ENCODE measurements at regions of chr19 and their contacts with region 1.

Region 1: DNA sequence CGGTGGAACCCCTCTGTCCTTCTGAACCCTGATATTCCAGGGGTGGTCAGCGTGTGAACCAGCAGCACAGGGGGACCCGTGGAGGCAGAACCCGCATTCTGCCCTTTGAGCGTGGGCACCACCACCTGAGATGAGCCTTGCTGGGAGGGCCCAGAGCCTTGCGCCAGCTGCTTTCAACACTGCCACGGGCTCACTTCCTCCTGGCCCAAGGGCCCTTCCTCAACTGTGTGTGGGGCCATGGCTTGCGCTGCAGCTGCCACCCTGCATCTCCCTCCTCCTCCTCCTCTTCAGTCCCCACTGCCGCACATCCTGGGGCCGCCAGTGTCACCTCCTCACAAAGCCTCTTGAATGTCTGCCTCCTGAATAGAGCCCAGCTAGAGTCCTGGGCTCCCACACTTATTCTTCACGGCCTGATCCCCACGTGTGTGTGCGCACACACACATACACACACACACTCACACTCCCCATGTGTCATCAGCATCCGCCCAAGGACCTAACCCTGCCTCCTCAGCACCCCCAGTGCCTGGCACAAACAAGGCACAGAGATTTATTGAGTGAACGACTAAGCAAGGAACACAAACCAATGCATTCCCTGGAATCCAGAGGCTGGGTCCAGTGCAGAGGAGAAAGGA is 26.9 kb upstream of the TMEM160 start:
- DNase-seq: no peak
- H3K4me3 ChIP-seq: no peak overlapping the region
- CTCF ChIP-seq: no peak

Region 2: DNA sequence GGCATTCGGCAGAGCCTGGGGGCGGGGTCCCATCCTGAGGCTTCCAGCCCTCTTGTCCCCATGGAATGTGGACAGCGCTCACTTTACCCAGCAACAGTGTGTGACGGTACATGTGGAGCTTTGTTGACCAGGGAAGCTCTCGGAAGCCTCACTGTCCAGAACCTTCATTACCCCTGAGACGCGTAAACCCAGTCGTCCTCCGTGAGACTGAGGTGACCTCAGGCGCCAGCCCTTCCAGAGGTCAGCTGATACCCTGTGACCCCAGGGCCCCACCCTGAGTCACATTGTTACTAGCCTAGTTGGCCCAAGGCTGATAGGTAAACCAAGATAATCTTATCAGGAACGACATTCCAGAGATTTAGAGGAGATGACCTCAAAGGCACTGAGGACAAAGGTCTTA is 16.7 kb before region 1 on chr19:
- CTCF ChIA-PET with region 1: interaction called, 14 read pairs
- POLR2A ChIA-PET with region 1: no interaction called
- DNase-seq: no peak
- H3K4me3 ChIP-seq: no peak overlapping the region
- CTCF ChIP-seq: no peak

Region 3: DNA sequence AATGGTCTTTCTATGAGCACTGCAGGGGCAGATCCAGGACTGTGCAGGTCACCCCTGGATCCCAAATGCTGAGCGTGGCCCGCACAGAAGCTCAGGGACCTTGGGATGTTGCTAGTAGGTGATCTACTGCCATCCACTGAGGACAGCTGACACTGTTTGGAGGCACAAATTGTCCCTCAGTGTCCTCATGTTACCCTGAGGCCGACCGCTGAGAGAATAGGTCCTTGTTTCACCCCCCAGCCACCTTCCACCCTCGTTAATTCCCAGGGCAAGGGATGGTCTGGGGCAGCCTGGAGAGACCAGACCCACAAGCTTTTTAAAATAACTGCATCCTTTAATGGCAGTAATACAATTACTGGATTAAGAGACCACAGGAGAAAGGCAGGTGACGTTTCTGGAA is 11.4 kb before region 1 on chr19:
- CTCF ChIA-PET with region 1: interaction called, 14 read pairs
- POLR2A ChIA-PET with region 1: no interaction called
- DNase-seq: no peak
- H3K4me3 ChIP-seq: no peak overlapping the region
- CTCF ChIP-seq: no peak

Region 4: GRCh38 chr19:47112997-47113849 is 37.9 kb after region 1 on chr19 and contains the start of gene ZC3H4:
- CTCF ChIA-PET with region 1: interaction called, 19 read pairs
- POLR2A ChIA-PET with region 1: interaction called, 8 read pairs
- DNase-seq: peak; percentile 95
- H3K4me3 ChIP-seq: peak within 1 kb of the TSS; percentile 86
- CTCF ChIP-seq: no peak

Measured in AG04449 (cell line).